ENCODE measurements at regions of chr11 and their contacts with region 1.

Region 1: DNA sequence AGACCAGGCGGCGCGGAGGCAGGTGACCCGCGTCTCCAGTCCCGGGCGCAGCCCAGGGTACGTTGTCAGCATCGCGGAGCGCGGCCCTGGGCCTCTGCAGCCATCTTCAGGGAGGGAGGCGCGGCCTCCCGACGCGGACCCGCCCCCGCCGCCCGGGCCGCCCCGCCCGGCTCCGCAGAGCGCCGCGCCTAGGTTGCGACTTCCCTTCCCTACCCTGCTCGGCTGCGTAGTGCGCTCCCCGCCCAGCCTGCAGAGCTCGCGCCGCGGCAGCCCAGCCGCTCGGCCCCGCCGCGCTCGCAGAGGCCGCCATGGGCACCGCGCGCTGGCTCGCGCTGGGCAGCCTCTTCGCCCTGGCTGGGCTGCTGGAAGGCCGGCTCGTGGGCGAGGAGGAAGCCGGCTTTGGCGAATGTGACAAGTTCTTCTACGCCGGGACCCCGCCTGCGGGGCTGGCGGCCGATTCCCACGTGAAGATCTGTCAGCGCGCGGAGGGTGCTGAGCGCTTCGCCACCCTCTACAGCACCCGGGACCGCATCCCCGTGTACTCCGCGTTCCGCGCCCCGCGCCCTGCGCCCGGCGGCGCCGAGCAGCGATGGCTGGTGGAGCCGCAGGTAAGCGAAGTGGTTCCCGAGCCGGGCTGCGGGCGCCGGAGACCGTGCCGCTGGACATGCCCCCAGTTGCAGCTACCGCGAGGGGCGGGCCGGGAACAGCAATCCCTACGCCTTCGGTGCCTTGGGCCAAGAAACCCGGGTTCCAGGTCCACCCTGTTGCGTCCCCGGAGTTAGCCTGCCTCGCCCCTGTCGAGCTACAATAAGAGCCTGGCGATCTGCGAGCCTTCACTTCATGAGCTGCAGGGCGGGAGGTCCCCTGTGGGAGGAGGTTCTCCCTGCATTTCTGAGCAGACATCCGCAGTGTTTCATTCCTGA is at the start of gene ENDOD1:
- DNase-seq: peak; percentile 89 to 91 (median 89)
- ATAC-seq: peak; percentile 98
- H3K4me3 ChIP-seq: peak within 1 kb of the TSS; percentile 79
- H3K27ac ChIP-seq: peak within 1 kb of the TSS; percentile 61
- H3K4me1 ChIP-seq: peaks cover 26 to 33% of the 10 kb centered on the region in 2 experiments
- H3K27me3 ChIP-seq: no peaks in the 10 kb centered on the region
- CTCF ChIP-seq: peak in 2 of 3 experiments; percentile 20 to 28; a peak in 1 of 6 replicates
- EP300 ChIP-seq: no peak
- POLR2A ChIP-seq: no peak; the same call in none of the 2 replicates
- RAD21 ChIP-seq: no peak
- polyA plus RNA-seq, gene ENDOD1: 4.2 to 4.4 TPM

Region 2: DNA sequence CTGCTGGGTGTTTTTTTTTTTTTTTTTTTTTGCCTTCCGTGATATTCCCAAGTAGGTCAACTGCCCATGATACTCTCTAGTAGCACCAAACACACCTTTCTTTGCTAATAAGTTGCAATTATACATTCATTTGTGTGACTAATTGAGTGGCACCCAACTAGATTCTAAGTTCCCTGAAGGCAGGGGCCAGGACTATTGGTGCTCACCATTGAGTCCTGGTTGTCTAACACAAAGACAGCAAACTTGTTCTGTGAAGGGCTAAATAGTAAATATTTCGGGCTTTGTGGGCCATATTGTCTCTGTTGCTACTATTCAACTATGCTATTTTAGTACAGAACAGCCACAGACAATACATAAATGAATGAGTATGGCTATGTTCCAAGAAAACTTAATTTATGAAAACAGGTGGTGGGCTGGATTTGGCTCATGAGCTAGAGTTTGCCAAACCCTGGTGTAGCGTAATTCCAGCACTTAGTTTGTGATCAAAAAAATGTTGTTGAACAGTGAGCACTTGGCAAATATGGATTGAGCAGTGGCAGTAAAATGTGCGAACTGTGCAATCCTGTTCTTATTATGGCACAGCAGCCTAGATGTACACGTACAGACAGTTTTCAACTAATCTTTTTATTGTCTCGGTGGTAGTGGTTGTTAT is 11.1 kb after region 1 on chr11:
- CTCF ChIA-PET with region 1: no interaction called
- POLR2A ChIA-PET with region 1: interaction called, 37 read pairs
- in situ Hi-C with region 1: no loop called
- intact Hi-C with region 1: no loop called
- DNase-seq: no peak
- ATAC-seq: no peak
- H3K4me3 ChIP-seq: no peak overlapping the region
- H3K27ac ChIP-seq: no peak overlapping the region
- H3K4me1 ChIP-seq: peaks cover 6 to 43% of the 10 kb centered on the region in 2 experiments; a peak in 4 of 5 replicates
- H3K27me3 ChIP-seq: no peaks in the 10 kb centered on the region
- CTCF ChIP-seq: no peak
- EP300 ChIP-seq: no peak
- POLR2A ChIP-seq: no peak
- RAD21 ChIP-seq: no peak